PC-9 (cell line): ENCODE measurements at regions of chr22 and their contacts with region 1.

Region 1: DNA sequence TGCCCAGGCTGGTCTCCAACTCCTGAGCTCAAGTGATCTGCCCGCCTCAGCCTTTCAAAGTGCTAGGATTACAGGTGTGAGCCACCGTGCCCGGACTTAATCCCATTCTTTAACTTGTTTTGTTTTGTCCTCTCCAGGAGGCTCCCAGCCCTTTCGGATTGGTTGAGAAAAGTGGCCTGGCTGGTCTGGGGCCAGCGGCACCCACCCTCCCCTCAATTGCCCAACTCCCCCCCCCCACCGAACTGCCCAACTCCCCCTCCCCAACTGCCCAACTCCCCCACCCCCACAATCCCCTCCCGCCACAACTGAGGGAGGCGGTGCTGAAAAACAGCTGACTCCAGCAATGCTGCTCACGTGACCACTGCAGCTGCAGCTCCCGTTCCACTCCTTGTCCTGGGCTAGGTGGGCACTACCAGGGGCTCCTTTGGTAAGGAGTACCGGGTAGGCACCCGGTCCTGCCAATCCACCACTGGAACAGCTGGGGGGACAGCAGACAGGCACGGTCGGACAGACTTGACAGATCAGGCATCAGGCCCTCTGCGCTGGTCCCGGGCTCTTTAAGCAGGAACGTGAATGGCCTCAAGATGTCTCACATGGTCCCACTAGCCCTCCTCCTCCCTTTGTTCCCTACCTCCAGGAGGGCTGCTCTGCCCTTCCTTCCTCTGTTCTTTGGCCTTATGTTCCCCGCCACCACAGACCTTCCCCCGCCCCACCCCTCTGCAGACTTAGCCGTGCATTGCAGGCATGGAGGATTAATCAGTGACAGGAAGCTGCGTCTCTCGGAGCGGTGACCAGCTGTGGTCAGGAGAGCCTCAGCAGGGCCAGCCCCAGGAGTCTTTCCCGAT is at the start of gene TCN2:
- DNase-seq: peak in 1 of 2 experiments; percentile 53
- H3K4me3 ChIP-seq: peak within 1 kb of the TSS; percentile 46; the same call in 1 of the 2 replicates
- H3K27ac ChIP-seq: no peak within 1 kb of the TSS
- H3K4me1 ChIP-seq: peaks cover 34% of the 10 kb centered on the region
- H3K27me3 ChIP-seq: no peaks in the 10 kb centered on the region
- CTCF ChIP-seq: no peak
- total RNA-seq, gene TCN2: 11.5 and 12.9 TPM in 2 replicates

Region 2: DNA sequence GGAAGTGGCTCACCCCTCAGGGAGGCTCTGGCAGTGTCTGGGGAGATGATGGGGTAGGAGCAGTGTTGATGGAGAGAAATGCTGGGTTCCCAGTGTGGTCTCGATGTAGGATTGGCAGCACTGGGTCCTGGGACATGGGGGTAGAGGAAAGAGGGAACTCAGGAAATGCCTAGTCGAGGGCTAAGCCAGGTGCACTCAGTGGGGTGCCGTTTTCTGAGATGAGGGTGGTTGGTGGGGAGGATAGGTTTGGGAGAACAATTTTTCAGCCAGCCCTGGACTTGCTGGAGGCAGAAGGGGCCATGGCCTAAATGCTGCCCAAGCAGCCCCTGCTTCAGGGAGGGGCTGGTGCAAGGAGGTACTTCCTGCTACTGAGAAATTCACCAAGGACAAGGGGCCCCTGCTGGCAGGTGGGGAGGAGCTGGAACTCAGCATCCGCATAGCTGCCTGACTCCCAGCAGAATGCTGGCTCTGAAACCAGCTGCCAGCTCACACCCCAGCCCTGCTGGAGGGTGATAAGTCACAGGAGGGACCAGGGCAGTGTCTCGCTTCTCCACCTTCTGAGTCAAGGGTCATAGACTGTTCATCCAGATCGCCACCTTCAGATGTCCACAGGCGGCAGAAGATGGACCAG is 243.9 kb before region 1 on chr22:
- CTCF ChIA-PET with region 1: no interaction called
- POLR2A ChIA-PET with region 1: interaction called, 22 read pairs
- intact Hi-C with region 1: no loop called
- DNase-seq: peak; percentile 55 to 73
- H3K4me3 ChIP-seq: no peak overlapping the region
- H3K27ac ChIP-seq: no peak overlapping the region
- H3K4me1 ChIP-seq: 0 out of 2 replicates have a peak, but pooled peaks cover 4% of the 10 kb centered on the region
- H3K27me3 ChIP-seq: no peaks in the 10 kb centered on the region
- CTCF ChIP-seq: no peak

Region 3: GRCh38 chr22:30408414-30409104 is 198.1 kb before region 1 on chr22:
- CTCF ChIA-PET with region 1: interaction called, 10 read pairs
- POLR2A ChIA-PET with region 1: no interaction called
- intact Hi-C with region 1: no loop called
- DNase-seq: peak; percentile 72 to 94
- H3K4me3 ChIP-seq: no peak overlapping the region
- H3K27ac ChIP-seq: peak overlapping the region; percentile 73
- H3K4me1 ChIP-seq: peaks cover 33% of the 10 kb centered on the region
- H3K27me3 ChIP-seq: no peaks in the 10 kb centered on the region
- CTCF ChIP-seq: no peak

Region 4: DNA sequence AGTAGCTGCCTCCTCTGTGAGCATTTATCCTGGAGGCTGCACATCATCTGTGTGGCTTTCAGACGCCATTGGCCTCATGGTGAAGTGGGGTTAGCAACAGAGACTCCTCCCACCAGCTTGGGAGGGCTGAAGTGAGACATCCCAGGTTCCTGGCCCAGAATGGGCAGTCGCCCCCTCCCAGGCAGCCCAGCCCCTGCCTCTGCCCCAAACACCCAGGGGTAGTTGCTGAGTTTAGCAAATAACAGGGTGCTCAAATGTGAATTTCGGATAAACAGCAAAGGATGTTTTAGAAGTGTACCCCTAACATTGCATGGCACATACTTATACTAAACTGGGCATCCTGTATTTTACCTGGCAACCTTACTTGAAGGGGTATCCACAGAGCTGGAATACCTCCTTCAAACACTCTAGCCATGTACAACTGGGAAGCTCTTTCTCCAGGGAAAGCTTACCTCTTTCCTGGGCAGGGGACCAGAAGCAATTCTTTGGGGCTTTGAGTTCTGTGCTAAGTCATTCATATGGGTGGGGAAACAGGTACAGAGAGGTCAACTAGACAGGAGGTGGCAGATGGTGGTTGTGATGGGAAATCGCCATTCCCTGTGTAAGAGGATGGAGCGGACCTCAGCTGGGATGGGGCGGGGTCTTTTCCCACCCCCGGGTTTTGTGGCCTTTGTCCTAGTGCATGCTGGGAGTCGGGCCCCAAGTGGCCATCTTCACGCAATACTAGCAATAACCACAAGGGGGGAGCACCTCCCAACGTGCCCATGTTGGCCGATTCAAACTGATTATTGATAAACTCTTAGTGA is 161.8 kb before region 1 on chr22:
- CTCF ChIA-PET with region 1: no interaction called
- POLR2A ChIA-PET with region 1: no interaction called
- intact Hi-C with region 1: loop called (anchors 1 kb)
- DNase-seq: peak in 1 of 2 experiments; percentile 53
- H3K4me3 ChIP-seq: no peak overlapping the region
- H3K27ac ChIP-seq: no peak overlapping the region
- H3K4me1 ChIP-seq: peaks cover 9% of the 10 kb centered on the region
- H3K27me3 ChIP-seq: no peaks in the 10 kb centered on the region
- CTCF ChIP-seq: peak; percentile 91

Region 5: DNA sequence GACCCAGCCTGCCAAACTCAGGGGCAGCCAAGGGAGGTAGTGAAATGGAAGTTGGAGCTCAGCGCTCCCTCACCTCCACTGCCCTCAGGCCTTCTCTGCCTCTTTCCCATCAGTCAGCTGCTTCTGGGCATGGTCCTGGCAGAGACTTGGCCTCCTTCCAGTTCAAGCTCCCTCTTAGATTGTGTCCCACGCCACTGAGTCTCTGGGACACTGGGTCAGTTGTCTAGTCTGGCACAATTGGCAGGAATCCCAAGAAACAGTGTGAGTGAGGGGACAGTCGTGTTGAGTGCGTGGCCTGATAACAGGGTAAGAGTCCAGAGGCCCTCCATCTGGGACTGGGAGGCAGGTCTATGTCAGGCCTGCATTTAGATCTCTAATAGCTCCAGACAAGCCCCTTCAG is 21.8 kb after region 1 on chr22:
- CTCF ChIA-PET with region 1: interaction called, 14 read pairs
- POLR2A ChIA-PET with region 1: interaction called, 3 read pairs
- intact Hi-C with region 1: no loop called
- DNase-seq: no peak
- H3K4me3 ChIP-seq: no peak overlapping the region
- H3K27ac ChIP-seq: no peak overlapping the region
- H3K4me1 ChIP-seq: no peaks in the 10 kb centered on the region
- H3K27me3 ChIP-seq: no peaks in the 10 kb centered on the region
- CTCF ChIP-seq: no peak

Region 6: DNA sequence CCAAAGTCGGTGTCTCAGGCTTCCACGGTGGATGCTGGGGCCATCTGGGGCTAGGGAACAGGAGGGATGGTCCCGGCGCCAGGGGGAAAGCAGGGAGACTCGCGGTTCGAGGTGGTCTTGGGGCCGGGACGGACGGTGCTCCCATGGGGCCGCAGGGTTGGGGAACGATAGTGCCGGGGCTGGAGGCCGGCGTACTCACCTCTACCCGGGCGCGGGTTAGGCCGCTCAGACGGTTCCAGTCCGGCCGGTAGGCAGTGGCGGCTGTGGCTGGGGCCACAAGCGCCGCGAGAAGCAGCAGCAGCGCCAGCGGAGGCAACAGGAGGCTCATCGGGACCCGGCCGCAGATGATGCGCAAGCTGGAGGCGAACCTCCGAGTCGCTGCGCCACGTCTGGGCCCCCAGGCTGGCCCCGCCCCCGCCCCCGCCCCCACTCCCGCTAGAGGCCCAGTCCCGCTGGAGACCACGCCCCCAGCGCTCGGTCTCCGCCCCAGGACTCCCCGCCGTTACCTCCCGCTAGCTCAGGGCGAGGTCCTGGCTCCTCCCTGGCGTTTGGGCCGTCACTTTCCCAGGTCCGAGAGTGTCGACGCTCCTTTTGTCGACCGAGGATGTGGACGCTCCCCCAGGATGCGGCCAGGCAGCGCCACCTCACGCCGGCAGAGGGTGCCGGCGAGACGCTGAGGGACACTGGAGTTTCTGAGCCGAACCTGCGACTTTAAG is 500.7 kb after region 1 on chr22 and contains the start of gene SELENOM:
- CTCF ChIA-PET with region 1: interaction called, 12 read pairs
- POLR2A ChIA-PET with region 1: no interaction called
- intact Hi-C with region 1: no loop called
- DNase-seq: peak; percentile 93 to 97
- H3K4me3 ChIP-seq: peak within 1 kb of the TSS; percentile 54
- H3K27ac ChIP-seq: no peak within 1 kb of the TSS
- H3K4me1 ChIP-seq: peaks cover 20% of the 10 kb centered on the region
- H3K27me3 ChIP-seq: no peaks in the 10 kb centered on the region
- CTCF ChIP-seq: peak; percentile 96
- total RNA-seq, gene SELENOM: 20.7 and 23.3 TPM in 2 replicates